Heart right ventricle (tissue), 16 donors: ENCODE measurements at regions of chr5 and their contacts with region 1.

Region 1: GRCh38 chr5:38528162-38528703 is 28.2 kb downstream of the LIFR start:
- DNase-seq: no peak
- ATAC-seq: peak in 2 of 8 donors; percentile 26 to 30
- H3K4me3 ChIP-seq: no peak overlapping the region
- H3K27ac ChIP-seq: no peak overlapping the region
- H3K4me1 ChIP-seq: peaks cover 3 to 54% (median 38%) of the 10 kb centered on the region in 9 donors
- H3K27me3 ChIP-seq: peaks cover 0 to 3% (median 0%) of the 10 kb centered on the region in 7 donors
- CTCF ChIP-seq: peak in 2 of 9 donors; percentile 7 to 20

Region 2: GRCh38 chr5:38483788-38484398 is 44.3 kb before region 1 on chr5:
- intact Hi-C with region 1: loop called in 1 of 10 experiments (anchors 5 kb)
- DNase-seq: no peak
- ATAC-seq: no peak
- H3K4me3 ChIP-seq: no peak overlapping the region
- H3K27ac ChIP-seq: no peak overlapping the region
- H3K4me1 ChIP-seq: no peaks in the 10 kb centered on the region
- H3K27me3 ChIP-seq: peaks cover 0 to 25% (median 0%) of the 10 kb centered on the region in 7 donors
- CTCF ChIP-seq: peak in 1 of 9 donors; percentile 12

Region 3: GRCh38 chr5:38509185-38509584 is 19.0 kb before region 1 on chr5:
- intact Hi-C with region 1: loop called in 1 of 10 experiments (anchors 2 kb)
- DNase-seq: no peak
- ATAC-seq: no peak
- H3K4me3 ChIP-seq: no peak overlapping the region
- H3K27ac ChIP-seq: no peak overlapping the region
- H3K4me1 ChIP-seq: peaks cover 0 to 4% (median 0%) of the 10 kb centered on the region in 9 donors
- H3K27me3 ChIP-seq: no peaks in the 10 kb centered on the region
- CTCF ChIP-seq: no peak